Mammary epithelial cell (primary cell): ENCODE measurements at regions of chr5 and their contacts with region 1.

Region 1: GRCh38 chr5:68587171-68587570 is 371.6 kb downstream of the PIK3R1 start:
- DNase-seq: no peak
- H3K4me3 ChIP-seq: no peak overlapping the region
- H3K27ac ChIP-seq: no peak overlapping the region
- H3K4me1 ChIP-seq: no peaks in the 10 kb centered on the region
- H3K27me3 ChIP-seq: no peaks in the 10 kb centered on the region
- CTCF ChIP-seq: no peak

Region 2: DNA sequence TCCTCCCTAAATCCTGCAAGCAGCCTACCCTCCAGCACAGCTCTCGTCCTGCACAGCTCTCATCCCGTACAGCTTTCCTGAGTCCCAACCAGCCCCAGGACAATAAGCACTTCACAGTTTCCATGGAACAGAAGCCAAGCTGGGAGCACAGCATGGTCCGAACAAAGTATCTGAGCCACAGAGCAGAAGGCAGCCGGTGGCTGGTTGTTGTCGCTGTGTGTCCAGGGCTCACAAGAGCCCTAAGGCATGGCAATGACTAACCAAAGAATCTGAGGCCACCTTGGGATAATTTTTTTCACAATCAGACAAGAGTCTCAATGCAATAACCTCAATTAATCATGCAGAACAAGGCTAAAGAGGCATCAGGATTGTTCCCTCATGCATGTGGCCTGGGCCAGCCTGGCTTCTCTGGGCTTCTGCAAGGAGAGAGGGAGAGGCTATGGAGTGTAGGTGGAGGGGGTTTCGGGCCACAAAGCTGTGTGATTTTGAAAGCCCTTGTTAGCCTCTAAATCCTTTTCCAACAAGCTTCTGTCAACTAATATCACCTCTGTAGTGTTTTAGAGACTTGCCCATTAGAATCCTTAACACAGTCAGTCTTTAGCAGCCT is 48.3 kb before region 1 on chr5:
- CTCF ChIA-PET with region 1: no interaction called
- dilution Hi-C with region 1: loop called (anchors 5 kb)
- in situ Hi-C with region 1: no loop called
- intact Hi-C with region 1: no loop called
- DNase-seq: no peak
- H3K4me3 ChIP-seq: no peak overlapping the region
- H3K27ac ChIP-seq: no peak overlapping the region
- H3K4me1 ChIP-seq: peaks cover 2% of the 10 kb centered on the region
- H3K27me3 ChIP-seq: no peaks in the 10 kb centered on the region
- CTCF ChIP-seq: no peak

Region 3: GRCh38 chr5:68565427-68565826 is 21.7 kb before region 1 on chr5:
- CTCF ChIA-PET with region 1: no interaction called
- dilution Hi-C with region 1: no loop called
- in situ Hi-C with region 1: no loop called
- intact Hi-C with region 1: loop called (anchors 1 kb)
- DNase-seq: no peak
- H3K4me3 ChIP-seq: no peak overlapping the region
- H3K27ac ChIP-seq: no peak overlapping the region
- H3K4me1 ChIP-seq: no peaks in the 10 kb centered on the region
- H3K27me3 ChIP-seq: no peaks in the 10 kb centered on the region
- CTCF ChIP-seq: no peak

Region 4: DNA sequence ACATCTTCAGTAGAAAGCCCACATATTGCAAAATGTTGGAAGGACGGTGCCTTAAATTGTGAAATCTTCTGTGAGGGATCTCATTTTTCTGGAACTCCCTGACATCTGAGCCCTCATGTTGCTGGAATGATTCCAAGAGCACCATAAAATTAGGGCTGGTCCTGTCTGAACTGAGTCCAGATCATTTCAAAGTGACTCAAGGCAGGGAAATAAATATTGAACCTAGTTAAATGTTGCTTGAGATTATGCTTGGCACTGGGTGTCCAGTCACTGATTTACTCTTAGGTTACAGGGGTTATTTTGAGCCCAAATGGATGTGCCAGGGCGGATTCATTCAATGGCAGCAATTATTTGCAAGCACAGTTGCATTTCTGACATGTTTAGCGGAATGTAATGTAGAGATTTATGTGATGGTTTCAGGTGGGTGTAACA is 65.4 kb after region 1 on chr5:
- CTCF ChIA-PET with region 1: no interaction called
- dilution Hi-C with region 1: no loop called
- in situ Hi-C with region 1: no loop called
- intact Hi-C with region 1: no loop called
- DNase-seq: peak; percentile 51
- H3K4me3 ChIP-seq: no peak overlapping the region
- H3K27ac ChIP-seq: no peak overlapping the region
- H3K4me1 ChIP-seq: no peaks in the 10 kb centered on the region
- H3K27me3 ChIP-seq: no peaks in the 10 kb centered on the region
- CTCF ChIP-seq: no peak